Activated CD8-positive, alpha-beta T cell treated with anti-CD3 and anti-CD28 coated beads for 36 hours (primary cell): ENCODE measurements at regions of chr17 and their contacts with region 1.

Region 1: DNA sequence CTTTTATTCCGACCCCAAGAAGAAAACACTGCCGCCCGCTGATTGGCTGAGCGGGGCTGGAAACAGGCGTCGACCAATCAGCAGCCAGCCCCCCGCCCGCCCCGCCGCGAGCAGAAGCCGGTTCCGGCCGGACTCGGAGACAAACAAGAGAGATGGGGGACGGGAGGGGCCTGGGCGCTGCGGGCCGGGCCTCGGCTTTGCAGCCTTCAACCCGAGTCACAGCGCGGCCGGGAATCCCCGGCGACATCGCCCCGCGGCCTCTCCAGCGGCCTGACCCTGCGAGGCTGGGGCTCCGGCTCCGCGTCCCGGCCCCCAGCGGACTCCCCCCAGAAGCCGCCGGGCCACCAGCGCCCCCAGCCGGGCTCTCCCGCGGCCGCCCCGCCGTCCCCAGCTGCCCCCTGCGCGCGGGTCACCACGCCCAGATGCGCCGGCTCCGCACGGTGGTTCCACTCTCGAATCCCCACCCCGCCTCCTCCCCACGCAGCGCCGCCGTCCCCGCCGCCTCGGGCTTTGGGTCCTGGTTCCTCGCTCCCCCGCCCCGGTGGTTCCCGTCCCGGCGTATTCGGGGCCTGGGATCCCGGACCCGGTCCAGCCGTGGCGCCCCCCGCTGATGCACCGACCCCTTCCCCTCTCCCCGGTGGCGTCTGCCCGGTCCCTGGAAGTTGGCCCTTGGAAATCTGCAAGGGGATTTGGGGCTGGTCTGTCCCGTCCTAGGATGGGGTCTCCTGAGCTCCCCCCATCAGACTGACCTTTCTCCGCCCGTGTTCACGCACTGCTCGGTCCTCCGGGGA is 417 bp upstream of the SLC43A2 start:
- DNase-seq: peak; percentile 96
- ATAC-seq: peak; percentile 78
- H3K4me3 Mint-ChIP-seq: peak overlapping the region; percentile 88
- H3K27ac Mint-ChIP-seq: peak overlapping the region; percentile 90
- H3K4me1 Mint-ChIP-seq: peaks cover 11% of the 10 kb centered on the region
- H3K27me3 Mint-ChIP-seq: peaks cover 8% of the 10 kb centered on the region
- CTCF ChIP-seq: no peak

Region 2: DNA sequence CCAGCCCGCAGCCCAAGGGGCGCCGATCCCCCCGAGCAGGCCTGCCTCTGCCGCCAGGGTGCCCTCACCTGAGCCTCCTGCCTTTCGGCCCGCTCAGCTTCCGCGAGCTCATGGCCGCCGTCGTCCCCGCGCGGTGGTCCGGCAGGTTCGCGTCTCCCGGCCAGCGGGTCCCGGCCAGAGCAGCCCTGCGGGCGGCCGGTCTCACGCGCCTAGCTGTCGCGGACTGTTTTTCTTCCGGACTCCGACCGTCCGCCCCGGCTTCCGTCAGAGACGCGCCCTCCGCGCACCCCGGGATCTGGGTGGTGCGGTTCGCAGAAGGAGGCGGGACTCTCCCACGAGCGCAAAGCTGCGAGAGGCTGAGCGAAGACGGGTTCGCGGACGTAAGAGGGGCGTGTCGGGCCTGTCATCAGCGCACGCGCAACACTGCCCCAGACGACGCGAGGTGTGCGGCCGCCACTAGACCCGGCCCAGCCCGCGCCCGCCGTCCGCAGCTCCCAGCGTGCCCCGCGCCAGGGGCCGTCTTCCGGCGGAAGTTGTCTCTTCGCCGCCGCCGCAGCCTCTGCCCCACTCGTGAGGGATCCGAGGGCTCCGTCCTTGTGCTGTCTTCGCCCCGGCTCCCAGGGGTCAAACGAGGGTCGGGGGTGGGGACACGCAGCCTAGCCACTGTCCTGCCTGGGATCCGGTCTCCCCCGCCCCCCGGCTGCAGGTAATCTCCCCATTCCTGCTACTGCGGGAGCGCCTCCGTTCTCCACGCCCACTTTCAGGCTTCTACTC is 112.5 kb before region 1 on chr17 and contains the start of gene INPP5K:
- CTCF ChIA-PET with region 1: interaction called, 16 read pairs
- POLR2A ChIA-PET with region 1: no interaction called
- intact Hi-C with region 1: no loop called
- DNase-seq: peak; percentile 98
- ATAC-seq: peak; percentile 99
- H3K4me3 Mint-ChIP-seq: peak within 1 kb of the TSS; percentile 85
- H3K27ac Mint-ChIP-seq: peak within 1 kb of the TSS; percentile 82
- H3K4me1 Mint-ChIP-seq: peaks cover 24% of the 10 kb centered on the region
- H3K27me3 Mint-ChIP-seq: no peaks in the 10 kb centered on the region
- CTCF ChIP-seq: no peak
- total RNA-seq, gene INPP5K: 16.5 to 16.7 TPM

Region 3: DNA sequence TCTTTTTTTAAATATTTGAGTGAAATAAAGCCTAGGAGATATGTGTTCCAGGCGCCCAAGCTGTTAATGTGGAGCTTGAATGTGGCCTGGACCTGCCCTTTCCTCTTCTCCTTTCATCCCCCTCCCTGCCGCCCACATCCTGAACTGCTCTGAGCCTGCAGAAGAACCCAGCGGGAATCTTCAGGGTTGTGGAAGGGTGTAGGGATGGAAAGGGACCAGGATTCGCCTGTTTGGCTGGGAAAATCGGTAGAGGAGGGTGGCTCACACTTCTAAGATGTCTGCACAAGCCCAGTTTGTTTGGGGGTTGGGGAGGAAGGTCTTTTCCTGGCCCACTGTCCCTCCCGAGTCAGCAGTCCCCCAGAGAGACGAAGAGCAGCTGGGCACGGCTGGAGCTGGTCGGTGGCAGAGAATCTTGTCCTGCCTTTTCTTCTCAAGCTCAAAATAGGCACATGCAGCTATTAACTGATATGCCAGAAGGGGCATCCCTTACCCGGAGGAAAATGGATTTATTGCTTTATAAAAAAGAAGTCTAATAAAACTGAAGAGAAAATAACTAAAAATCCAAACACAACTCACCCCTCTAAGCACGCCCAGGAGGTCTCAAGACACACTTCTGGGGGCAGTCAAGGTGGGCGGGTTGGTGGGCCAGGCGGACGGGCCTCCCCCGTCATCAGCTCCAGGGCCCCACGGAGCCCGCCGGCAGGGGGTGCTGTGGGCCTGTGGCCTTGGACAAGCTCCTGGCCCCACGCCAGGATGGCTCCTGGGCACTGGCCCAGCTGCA is 54.9 kb before region 1 on chr17:
- CTCF ChIA-PET with region 1: interaction called, 243 read pairs
- POLR2A ChIA-PET with region 1: interaction called, 11 read pairs
- intact Hi-C with region 1: loop called (anchors 1 kb)
- DNase-seq: peak; percentile 86
- ATAC-seq: peak; percentile 90
- H3K4me3 Mint-ChIP-seq: no peak overlapping the region
- H3K27ac Mint-ChIP-seq: no peak overlapping the region
- H3K4me1 Mint-ChIP-seq: peaks cover 10% of the 10 kb centered on the region
- H3K27me3 Mint-ChIP-seq: no peaks in the 10 kb centered on the region
- CTCF ChIP-seq: peak; percentile 90

Region 4: GRCh38 chr17:1617620-1618174 is 11.4 kb before region 1 on chr17:
- CTCF ChIA-PET with region 1: interaction called, 26 read pairs
- POLR2A ChIA-PET with region 1: interaction called, 7 read pairs
- intact Hi-C with region 1: no loop called
- DNase-seq: no peak
- ATAC-seq: no peak
- H3K4me3 Mint-ChIP-seq: no peak overlapping the region
- H3K27ac Mint-ChIP-seq: no peak overlapping the region
- H3K4me1 Mint-ChIP-seq: peaks cover 3% of the 10 kb centered on the region
- H3K27me3 Mint-ChIP-seq: no peaks in the 10 kb centered on the region
- CTCF ChIP-seq: no peak

Region 5: DNA sequence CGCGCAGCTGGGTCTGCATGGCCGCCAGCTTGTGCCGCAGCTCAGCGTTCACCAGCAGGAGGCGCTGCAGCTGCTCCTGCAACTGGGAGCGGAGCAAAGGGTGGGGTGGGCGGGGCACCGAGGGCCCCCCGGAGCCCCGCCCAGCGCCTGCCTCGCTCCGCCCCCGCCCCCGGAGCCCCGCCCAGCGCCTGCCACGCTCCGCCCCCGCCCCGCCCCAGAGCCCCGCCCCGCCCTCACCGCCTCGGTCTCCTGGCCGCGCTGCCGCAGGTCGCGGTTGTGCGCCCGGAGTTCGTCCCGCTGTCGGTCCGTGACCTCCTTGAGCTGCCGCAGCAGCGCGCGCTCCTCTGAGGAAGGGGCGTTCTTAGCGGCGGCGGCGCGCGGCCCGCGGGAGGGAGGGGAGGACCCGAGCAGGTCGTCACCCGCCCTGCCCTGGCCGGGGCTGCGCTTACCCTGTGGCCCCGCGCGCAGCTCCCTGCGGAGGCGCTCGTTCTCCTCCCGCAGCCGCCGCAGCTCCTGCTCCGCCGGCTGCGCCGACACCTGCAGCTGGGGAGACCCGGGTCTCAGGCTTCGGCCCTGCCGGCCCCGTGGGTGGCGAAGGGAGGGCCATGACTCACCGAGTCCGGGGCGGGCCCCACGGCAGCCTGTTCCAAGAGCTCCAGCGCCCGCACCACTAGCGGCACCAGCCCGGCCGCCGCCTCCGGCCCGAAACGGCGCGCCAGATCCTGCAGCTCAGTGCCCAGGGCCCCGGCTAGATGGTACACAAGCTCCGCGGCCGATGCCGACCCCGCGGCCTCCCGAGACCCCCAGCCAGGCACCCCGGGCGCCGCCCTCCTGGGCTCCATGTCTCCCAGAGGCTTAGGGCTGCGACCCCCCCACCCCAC is 20.2 kb after region 1 on chr17:
- CTCF ChIA-PET with region 1: interaction called, 20 read pairs
- POLR2A ChIA-PET with region 1: interaction called, 6 read pairs
- intact Hi-C with region 1: no loop called
- DNase-seq: peak; percentile 95
- ATAC-seq: peak; percentile 72
- H3K4me3 Mint-ChIP-seq: peak overlapping the region; percentile 63
- H3K27ac Mint-ChIP-seq: peak overlapping the region; percentile 46
- H3K4me1 Mint-ChIP-seq: peaks cover 35% of the 10 kb centered on the region
- H3K27me3 Mint-ChIP-seq: no peaks in the 10 kb centered on the region
- CTCF ChIP-seq: peak; percentile 82

Region 6: DNA sequence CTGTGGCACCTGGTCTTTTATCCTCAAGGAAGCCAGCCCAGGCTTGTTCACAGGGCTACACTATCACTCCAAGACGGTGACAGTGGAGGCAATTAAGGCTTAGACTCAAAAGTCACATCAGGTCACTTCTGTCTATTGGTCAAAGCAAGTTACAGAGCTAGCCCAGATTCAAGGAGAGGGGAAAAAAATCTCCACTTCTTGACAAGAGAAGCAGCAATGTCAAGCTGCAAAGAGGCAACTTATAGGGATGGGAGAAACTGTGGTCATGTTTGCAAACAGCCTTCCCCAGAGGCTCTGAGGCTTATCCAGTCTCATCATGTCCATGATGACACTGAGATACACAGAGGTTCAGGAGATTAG is 164.4 kb after region 1 on chr17:
- CTCF ChIA-PET with region 1: no interaction called
- POLR2A ChIA-PET with region 1: no interaction called
- intact Hi-C with region 1: no loop called
- DNase-seq: no peak
- ATAC-seq: no peak
- H3K4me3 Mint-ChIP-seq: no peak overlapping the region
- H3K27ac Mint-ChIP-seq: no peak overlapping the region
- H3K4me1 Mint-ChIP-seq: peaks cover 10% of the 10 kb centered on the region
- H3K27me3 Mint-ChIP-seq: no peaks in the 10 kb centered on the region
- CTCF ChIP-seq: no peak

Region 7: GRCh38 chr17:2070241-2071023 is 441.4 kb after region 1 on chr17:
- CTCF ChIA-PET with region 1: no interaction called
- POLR2A ChIA-PET with region 1: no interaction called
- intact Hi-C with region 1: no loop called
- DNase-seq: peak; percentile 93
- ATAC-seq: peak; percentile 85
- H3K4me3 Mint-ChIP-seq: peak overlapping the region; percentile 21
- H3K27ac Mint-ChIP-seq: peak overlapping the region; percentile 80
- H3K4me1 Mint-ChIP-seq: peaks cover 48% of the 10 kb centered on the region
- H3K27me3 Mint-ChIP-seq: no peaks in the 10 kb centered on the region
- CTCF ChIP-seq: no peak